Breast epithelium (tissue), 4 donors: ENCODE measurements at regions of chr2 and their contacts with region 1.

Region 1: GRCh38 chr2:121736462-121737341 is at the start of gene NIFK:
- DNase-seq: peak; percentile 98 to 100
- H3K4me3 ChIP-seq: peak within 1 kb of the TSS; percentile 71 to 90 (median 89)
- H3K27ac ChIP-seq: peak within 1 kb of the TSS; percentile 79 to 84
- H3K4me1 ChIP-seq: no peaks in the 10 kb centered on the region
- H3K27me3 ChIP-seq: no peaks in the 10 kb centered on the region
- CTCF ChIP-seq: no peak
- POLR2A ChIP-seq: no peak
- total RNA-seq, gene NIFK: 33.9 to 45.6 (median 39.1) TPM

Region 2: DNA sequence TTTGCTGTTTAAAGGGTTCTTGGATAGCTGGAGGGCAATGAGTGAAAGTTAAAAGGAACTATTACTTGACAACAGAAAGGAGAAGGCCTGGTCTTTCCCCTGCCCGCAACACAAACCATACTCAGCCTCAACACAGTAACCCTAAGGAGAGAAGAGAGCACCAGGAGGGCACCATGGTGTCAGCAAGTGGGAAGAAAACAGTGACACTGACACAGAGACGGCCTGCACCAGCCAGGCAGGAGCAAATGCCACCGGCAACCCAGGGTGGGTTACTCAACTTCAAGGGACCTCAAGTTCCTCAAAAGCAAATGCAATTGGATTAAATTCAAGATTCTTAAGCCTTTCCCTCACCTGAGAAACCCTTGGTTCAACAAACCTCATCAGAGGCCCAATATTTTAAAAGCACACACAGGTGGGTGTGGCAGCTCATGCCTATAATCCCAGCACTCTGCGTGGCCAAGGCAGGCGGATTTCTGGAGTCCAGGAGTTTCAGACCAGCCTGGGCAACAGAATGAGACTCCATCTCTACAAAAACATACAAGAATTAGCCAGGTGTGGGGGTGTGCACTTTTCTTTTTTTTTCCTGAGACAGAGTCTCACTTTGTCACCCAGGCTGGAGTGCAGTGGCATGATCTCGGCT is 504.0 kb before region 1 on chr2:
- intact Hi-C with region 1: no loop called
- DNase-seq: no peak
- H3K4me3 ChIP-seq: no peak overlapping the region
- H3K27ac ChIP-seq: no peak overlapping the region
- H3K4me1 ChIP-seq: no peaks in the 10 kb centered on the region
- H3K27me3 ChIP-seq: no peaks in the 10 kb centered on the region
- CTCF ChIP-seq: no peak
- POLR2A ChIP-seq: no peak

Region 3: DNA sequence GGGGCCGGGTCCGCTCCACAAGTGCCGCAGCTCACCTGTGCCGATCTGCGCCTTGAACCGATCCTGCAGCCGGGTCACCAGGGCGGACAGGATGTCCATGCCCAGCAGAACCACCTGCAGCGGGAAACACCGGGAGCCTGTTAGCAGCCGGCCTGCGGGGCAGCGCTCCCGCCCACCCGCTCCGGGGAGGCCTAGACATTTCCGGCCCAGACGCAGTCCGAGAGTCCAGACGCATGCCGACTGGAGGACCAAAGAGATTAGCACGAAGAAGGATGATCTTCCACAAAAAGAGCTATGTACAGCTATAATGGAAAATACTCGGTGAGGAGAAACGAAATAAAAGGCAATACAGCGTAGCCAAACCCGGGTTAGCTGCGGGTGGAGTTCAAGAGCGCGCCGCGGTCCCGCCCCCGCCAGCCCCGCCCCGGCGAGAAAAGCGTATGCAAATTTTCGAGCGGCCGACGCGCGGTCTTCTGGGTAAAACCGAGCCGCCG is 206.4 kb before region 1 on chr2:
- intact Hi-C with region 1: loop called (anchors 10 kb)
- DNase-seq: peak; percentile 65 to 85
- H3K4me3 ChIP-seq: peak overlapping the region; percentile 66 to 84 (median 75)
- H3K27ac ChIP-seq: peak overlapping the region; percentile 96 to 97
- H3K4me1 ChIP-seq: peaks cover 0 to 12% of the 10 kb centered on the region in 2 donors
- H3K27me3 ChIP-seq: no peaks in the 10 kb centered on the region
- CTCF ChIP-seq: no peak
- POLR2A ChIP-seq: no peak